ENCODE measurements at regions of chr20 and their contacts with region 1.

Region 1: DNA sequence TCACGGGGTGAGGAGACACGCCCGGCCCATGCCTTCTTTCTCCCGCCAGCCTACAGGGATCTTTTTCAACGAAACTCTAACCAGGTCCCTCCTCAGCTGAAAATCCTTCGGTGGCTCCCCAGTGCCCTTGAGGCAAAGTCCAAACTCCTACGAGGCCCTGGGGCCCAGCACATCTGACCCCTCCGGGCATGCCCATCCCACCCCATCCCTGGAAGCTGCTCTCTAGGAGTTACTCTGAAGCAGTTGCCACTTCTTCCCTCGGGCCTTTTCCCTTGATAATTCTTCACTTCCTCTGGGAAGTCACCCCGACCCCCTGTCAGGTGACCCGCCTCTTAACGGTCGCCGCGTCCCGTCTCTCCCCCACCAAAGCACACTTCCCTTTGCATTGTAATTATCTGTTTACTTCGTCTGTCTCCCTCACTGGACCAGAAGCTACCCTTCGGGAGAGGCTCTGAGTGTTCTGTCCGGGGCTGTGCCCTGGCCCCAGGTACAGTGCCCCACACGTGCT is 888 bp upstream of the SNAI1 start:
- DNase-seq: no peak
- H3K4me3 ChIP-seq: peak overlapping the region in 2 of 3 donors; percentile 59 to 72
- H3K27ac ChIP-seq: peak overlapping the region; percentile 20 to 21
- H3K4me1 ChIP-seq: peaks cover 4 to 6% of the 10 kb centered on the region in 2 donors
- H3K27me3 ChIP-seq: no peaks in the 10 kb centered on the region
- CTCF ChIP-seq: no peak
- POLR2A ChIP-seq: no peak

Region 2: DNA sequence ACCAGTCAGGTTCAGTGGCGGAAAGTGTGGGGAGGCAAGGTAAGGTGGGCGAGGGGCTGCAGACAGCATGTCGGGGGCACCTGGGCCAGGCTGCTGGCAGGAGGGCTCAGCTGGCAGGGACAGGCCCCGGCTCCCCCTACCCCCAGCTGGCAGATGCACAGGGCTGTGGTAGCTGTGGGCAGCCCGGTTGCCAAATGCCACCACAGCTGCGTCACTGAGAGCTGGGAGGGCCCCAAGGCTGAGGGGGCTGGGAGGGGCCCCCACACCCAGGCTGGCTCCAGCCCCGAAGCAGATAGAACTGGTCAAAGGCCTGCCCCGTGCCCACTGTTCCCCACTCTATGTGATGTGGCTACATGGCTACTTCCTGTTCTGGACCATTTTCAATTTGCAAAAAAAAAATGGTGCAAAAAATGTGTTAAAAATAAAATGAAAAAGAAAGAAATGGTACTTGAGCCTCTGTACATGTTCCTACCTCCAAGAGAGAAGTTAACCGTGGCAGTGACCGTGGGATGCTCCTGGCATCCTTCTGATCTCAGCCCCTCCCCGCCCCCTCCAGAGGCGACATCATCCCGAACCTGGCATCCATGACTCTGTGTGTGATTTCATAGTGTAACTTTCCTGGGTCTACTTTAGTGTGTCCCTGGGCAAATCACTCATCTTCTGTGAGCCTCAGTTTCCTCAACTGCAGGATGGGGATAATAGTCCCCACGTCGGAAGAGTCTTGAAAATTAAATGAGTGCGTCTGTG is 66.7 kb after region 1 on chr20:
- intact Hi-C with region 1: no loop called
- DNase-seq: peak in 1 of 2 donors; percentile 33
- H3K4me3 ChIP-seq: peak overlapping the region in 1 of 3 donors; percentile 17
- H3K27ac ChIP-seq: peak overlapping the region; percentile 34 to 75
- H3K4me1 ChIP-seq: peaks cover 0 to 3% of the 10 kb centered on the region in 2 donors
- H3K27me3 ChIP-seq: no peaks in the 10 kb centered on the region
- CTCF ChIP-seq: no peak
- POLR2A ChIP-seq: no peak

Region 3: DNA sequence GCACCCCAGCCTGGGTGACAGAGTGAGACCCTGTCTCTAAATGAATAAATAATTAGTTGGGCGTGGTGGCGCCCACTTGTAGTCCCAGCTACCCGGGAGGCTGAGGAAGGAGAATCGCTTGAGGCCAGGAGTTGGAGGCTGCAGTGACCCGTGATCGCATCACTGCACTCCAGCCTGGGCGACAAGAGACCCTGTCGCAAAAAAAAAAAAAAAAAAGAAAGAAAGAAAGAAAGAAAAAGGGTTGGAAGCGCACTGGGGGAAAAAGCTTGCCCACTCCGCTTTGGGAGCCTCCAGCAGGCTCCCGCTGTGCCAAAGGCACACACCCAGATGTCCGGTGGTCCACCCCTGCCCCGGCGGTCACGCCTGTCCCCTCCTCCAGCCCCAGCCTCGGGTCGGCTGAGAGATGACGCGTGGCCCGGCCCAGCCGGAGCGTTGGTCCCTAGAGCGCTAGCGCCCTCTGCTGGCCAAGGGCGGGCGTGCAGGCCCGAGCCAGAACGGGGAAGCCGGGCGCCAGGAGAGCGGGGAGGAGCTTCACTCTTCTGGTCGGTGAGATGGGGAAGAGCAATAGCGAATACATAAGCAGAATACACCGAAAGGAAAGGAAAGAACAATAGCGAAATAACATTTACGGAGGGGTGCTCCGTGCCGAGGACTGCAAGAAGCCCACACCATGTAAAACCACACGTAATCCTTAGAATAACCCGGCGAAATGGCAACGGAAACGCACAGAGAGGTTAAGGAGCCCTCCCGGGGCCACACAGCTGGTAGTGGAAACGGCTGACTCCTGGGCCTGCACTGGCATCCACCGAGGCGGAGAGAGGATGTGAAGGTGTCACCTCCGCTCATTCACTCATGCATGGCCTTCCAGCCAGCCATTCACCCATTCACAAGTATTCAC is 89.3 kb after region 1 on chr20:
- intact Hi-C with region 1: loop called (anchors 1 kb)
- DNase-seq: peak; percentile 79 to 89
- H3K4me3 ChIP-seq: peak overlapping the region in 2 of 3 donors; percentile 39 to 47
- H3K27ac ChIP-seq: no peak overlapping the region
- H3K4me1 ChIP-seq: no peaks in the 10 kb centered on the region
- H3K27me3 ChIP-seq: no peaks in the 10 kb centered on the region
- CTCF ChIP-seq: peak; percentile 99 to 100 (median 99)
- POLR2A ChIP-seq: no peak